CD8-positive, alpha-beta T cell (primary cell): ENCODE measurements at regions of chr3 and their contacts with region 1.

Region 1: DNA sequence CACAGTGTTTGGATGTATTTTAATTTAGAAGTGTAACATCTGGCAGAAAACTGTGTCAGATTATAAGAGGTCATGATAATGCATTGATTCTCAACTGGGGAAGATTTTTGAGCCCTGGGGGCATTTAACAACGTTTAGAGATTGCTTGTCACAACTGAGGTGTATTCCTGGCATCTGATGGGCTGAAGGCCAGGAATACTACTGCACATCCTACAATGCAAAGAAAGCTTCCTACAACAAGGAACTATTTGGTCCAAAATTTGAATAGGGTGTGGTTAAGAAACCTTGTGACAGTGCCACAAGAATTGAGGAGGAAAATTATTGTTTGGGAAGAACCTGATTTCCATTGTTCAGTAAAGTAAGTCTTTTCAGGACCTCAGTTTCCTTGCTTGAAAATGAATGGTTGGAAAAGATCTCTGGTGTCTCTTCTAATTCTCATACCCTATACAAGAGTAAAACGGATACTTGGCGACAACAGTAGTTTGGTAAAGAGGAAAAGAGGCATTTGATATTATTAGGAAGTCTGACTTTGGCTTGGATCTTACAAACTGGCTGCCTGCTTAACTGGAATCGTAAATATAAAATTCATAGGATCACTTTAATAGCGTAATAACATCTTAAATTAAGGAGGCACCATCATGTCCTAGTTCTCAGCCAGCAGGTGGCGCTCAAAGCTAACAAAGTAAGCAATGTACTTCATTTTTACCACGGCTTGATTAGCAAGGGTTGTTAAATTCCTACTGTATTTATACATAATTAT is 4.3 kb downstream of the DAZL start:
- DNase-seq: peak; percentile 60 to 89 (median 85)
- ATAC-seq: peak; percentile 54
- H3K4me3 ChIP-seq: no peak overlapping the region
- H3K4me3 Mint-ChIP-seq: no peak overlapping the region
- H3K27ac ChIP-seq: no peak overlapping the region
- H3K27ac Mint-ChIP-seq: no peak overlapping the region
- H3K4me1 ChIP-seq: no peaks in the 10 kb centered on the region
- H3K4me1 Mint-ChIP-seq: peaks cover 8% of the 10 kb centered on the region
- H3K27me3 ChIP-seq: no peaks in the 10 kb centered on the region
- H3K27me3 Mint-ChIP-seq: no peaks in the 10 kb centered on the region
- CTCF ChIP-seq: peak; percentile 92

Region 2: DNA sequence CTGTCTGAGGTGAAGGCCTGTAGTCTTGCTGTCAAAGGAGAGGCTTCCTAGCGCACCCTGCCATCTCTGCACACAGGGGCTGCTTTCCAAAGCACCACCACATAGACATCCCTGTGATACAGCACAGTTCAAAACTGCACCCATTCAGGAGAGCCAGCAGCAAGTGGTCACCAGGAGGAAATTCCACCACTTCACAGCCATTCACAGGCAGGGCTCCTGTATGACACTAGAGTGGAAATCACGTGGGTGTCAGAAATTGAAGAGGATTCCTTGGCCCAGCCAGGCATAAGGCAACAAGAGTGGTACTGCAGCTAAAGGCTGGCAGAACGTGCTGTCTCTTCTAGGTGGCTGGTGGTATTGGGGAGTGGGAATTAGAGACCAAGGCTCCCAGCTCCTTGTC is 190.3 kb before region 1 on chr3:
- CTCF ChIA-PET with region 1: no interaction called
- POLR2A ChIA-PET with region 1: no interaction called
- intact Hi-C with region 1: no loop called
- DNase-seq: no peak
- ATAC-seq: no peak
- H3K4me3 ChIP-seq: no peak overlapping the region
- H3K4me3 Mint-ChIP-seq: no peak overlapping the region
- H3K27ac ChIP-seq: no peak overlapping the region
- H3K27ac Mint-ChIP-seq: no peak overlapping the region
- H3K4me1 ChIP-seq: no peaks in the 10 kb centered on the region
- H3K4me1 Mint-ChIP-seq: peaks cover 40% of the 10 kb centered on the region
- H3K27me3 ChIP-seq: no peaks in the 10 kb centered on the region
- H3K27me3 Mint-ChIP-seq: no peaks in the 10 kb centered on the region
- CTCF ChIP-seq: no peak

Region 3: GRCh38 chr3:16945330-16945729 is 344.4 kb after region 1 on chr3:
- CTCF ChIA-PET with region 1: no interaction called
- POLR2A ChIA-PET with region 1: no interaction called
- intact Hi-C with region 1: loop called in 1 of 2 experiments (anchors 10 kb)
- DNase-seq: peak in 1 of 9 experiments; percentile 17
- ATAC-seq: no peak
- H3K4me3 ChIP-seq: no peak overlapping the region
- H3K4me3 Mint-ChIP-seq: no peak overlapping the region
- H3K27ac ChIP-seq: no peak overlapping the region
- H3K27ac Mint-ChIP-seq: no peak overlapping the region
- H3K4me1 ChIP-seq: peaks cover 32% of the 10 kb centered on the region
- H3K4me1 Mint-ChIP-seq: peaks cover 77% of the 10 kb centered on the region
- H3K27me3 ChIP-seq: no peaks in the 10 kb centered on the region
- H3K27me3 Mint-ChIP-seq: no peaks in the 10 kb centered on the region
- CTCF ChIP-seq: no peak

Region 4: DNA sequence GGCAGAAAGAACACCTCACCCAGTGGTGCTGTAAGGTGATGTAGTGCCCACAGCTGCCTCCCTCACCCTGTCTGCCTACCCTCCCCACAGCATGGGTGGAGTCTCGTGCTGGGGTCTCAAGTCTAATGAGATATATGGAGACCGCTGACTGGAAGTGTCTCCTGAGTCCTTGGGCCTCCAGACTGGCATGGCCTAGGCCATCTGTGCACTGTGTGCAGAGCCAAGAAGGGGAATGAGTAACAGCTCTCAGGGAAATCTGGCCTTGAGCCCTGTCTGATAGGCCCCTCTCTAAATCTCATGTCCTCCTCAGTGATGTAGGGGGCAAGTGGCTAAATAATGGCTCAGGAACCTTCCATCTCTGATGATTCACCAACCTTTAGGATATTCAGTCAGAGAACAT is 561.2 kb after region 1 on chr3:
- CTCF ChIA-PET with region 1: interaction called, 5 read pairs
- POLR2A ChIA-PET with region 1: no interaction called
- intact Hi-C with region 1: loop called in 1 of 2 experiments (anchors 5 kb)
- DNase-seq: no peak
- ATAC-seq: no peak
- H3K4me3 ChIP-seq: no peak overlapping the region
- H3K4me3 Mint-ChIP-seq: no peak overlapping the region
- H3K27ac ChIP-seq: no peak overlapping the region
- H3K27ac Mint-ChIP-seq: no peak overlapping the region
- H3K4me1 ChIP-seq: peaks cover 8% of the 10 kb centered on the region
- H3K4me1 Mint-ChIP-seq: peaks cover 10% of the 10 kb centered on the region
- H3K27me3 ChIP-seq: no peaks in the 10 kb centered on the region
- H3K27me3 Mint-ChIP-seq: no peaks in the 10 kb centered on the region
- CTCF ChIP-seq: no peak

Region 5: DNA sequence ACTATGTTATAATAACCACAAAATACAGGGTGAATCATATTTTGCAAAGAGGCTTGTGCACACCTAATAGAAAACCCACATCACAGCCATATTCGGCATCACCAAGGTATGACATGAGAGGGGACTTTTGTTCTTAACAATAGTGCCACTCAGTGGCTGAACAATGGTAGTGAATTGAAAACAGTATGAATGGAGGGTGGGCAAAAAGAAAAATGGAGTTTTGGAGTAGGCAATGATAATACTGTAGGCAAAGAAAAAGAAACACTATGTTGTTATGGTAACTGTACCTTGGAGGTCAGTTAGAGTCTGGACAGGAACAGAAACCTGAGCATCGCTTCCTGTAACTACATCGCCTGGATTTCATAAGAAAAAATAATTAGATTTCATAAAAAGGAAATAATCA is 632.4 kb after region 1 on chr3:
- CTCF ChIA-PET with region 1: interaction called, 65 read pairs
- POLR2A ChIA-PET with region 1: no interaction called
- intact Hi-C with region 1: loop called (anchors 1 kb)
- DNase-seq: peak in 7 of 9 experiments; percentile 7 to 79 (median 35)
- ATAC-seq: peak; percentile 99
- H3K4me3 ChIP-seq: no peak overlapping the region
- H3K4me3 Mint-ChIP-seq: no peak overlapping the region
- H3K27ac ChIP-seq: no peak overlapping the region
- H3K27ac Mint-ChIP-seq: peak overlapping the region; percentile 3
- H3K4me1 ChIP-seq: peaks cover 20% of the 10 kb centered on the region
- H3K4me1 Mint-ChIP-seq: peaks cover 24% of the 10 kb centered on the region
- H3K27me3 ChIP-seq: no peaks in the 10 kb centered on the region
- H3K27me3 Mint-ChIP-seq: no peaks in the 10 kb centered on the region
- CTCF ChIP-seq: peak; percentile 84

Region 6: DNA sequence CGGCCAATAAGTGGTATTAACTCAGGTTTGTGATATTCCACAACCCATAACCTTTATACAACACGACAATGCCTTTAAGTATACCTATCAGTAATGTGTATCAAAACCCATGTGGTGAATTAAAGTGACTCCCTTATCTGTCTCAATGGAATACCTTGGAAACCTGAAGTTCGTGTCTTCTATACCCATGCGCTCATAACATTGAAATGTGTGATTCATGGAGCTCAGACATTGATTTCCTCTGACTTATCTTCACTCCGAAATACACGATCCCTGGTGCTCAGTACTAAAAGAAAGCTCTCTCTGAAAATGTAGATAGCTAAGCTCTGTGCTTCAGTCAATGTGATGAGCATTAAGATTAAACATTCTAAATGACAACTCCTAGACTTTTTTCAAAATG is 1001.2 kb after region 1 on chr3:
- CTCF ChIA-PET with region 1: no interaction called
- POLR2A ChIA-PET with region 1: no interaction called
- intact Hi-C with region 1: no loop called
- DNase-seq: no peak
- ATAC-seq: no peak
- H3K4me3 ChIP-seq: no peak overlapping the region
- H3K4me3 Mint-ChIP-seq: no peak overlapping the region
- H3K27ac ChIP-seq: no peak overlapping the region
- H3K27ac Mint-ChIP-seq: no peak overlapping the region
- H3K4me1 ChIP-seq: no peaks in the 10 kb centered on the region
- H3K4me1 Mint-ChIP-seq: peaks cover 4% of the 10 kb centered on the region
- H3K27me3 ChIP-seq: no peaks in the 10 kb centered on the region
- H3K27me3 Mint-ChIP-seq: no peaks in the 10 kb centered on the region
- CTCF ChIP-seq: no peak

Region 7: GRCh38 chr3:17841190-17841828 is 1240.3 kb after region 1 on chr3:
- CTCF ChIA-PET with region 1: interaction called, 25 read pairs
- POLR2A ChIA-PET with region 1: no interaction called
- intact Hi-C with region 1: loop called (anchors 1 to 2 kb)
- DNase-seq: peak; percentile 46 to 83 (median 71)
- ATAC-seq: peak; percentile 80
- H3K4me3 ChIP-seq: no peak overlapping the region
- H3K4me3 Mint-ChIP-seq: no peak overlapping the region
- H3K27ac ChIP-seq: no peak overlapping the region
- H3K27ac Mint-ChIP-seq: no peak overlapping the region
- H3K4me1 ChIP-seq: no peaks in the 10 kb centered on the region
- H3K4me1 Mint-ChIP-seq: no peaks in the 10 kb centered on the region
- H3K27me3 ChIP-seq: no peaks in the 10 kb centered on the region
- H3K27me3 Mint-ChIP-seq: no peaks in the 10 kb centered on the region
- CTCF ChIP-seq: peak; percentile 87